ENCODE measurements at regions of chr1 and their contacts with region 1.

Region 1: DNA sequence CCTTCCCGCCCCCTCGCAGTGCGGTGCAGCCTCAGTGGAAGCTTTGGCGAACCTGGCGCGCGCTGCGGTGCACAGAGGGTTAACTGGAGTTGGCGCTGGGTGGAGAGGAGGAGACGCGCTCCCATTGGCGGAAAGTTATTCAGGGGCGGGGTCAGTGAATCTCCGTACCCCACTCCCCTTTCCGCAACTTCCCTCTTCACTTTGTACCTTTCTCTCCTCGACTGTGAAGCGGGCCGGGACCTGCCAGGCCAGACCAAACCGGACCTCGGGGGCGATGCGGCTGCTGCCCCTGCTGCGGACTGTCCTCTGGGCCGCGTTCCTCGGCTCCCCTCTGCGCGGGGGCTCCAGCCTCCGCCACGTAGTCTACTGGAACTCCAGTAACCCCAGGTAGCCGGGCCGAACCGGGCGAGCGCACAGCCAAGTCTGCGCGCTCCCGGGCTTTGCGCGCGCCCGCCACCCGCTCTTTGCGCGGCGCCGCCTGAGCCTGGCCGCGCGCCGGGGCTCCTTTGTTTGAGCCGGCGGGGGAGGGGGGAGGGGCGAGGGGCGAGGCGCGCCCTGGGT is at the start of gene EFNA4:
- DNase-seq: peak; percentile 85 to 89 (median 88)
- ATAC-seq: peak; percentile 80 to 91 (median 88)
- H3K4me3 ChIP-seq: peak within 1 kb of the TSS; percentile 55 to 98 (median 82)
- H3K27ac ChIP-seq: peak within 1 kb of the TSS in 11 of 12 donors; percentile 56 to 84 (median 71)
- H3K4me1 ChIP-seq: peaks cover 0 to 42% (median 25%) of the 10 kb centered on the region in 12 donors
- H3K27me3 ChIP-seq: no peaks in the 10 kb centered on the region
- CTCF ChIP-seq: no peak
- POLR2A ChIP-seq: no peak
- total RNA-seq, gene EFNA4: 1.1 to 3.3 (median 2.2) TPM

Region 2: GRCh38 chr1:154906621-154907081 is 157.0 kb before region 1 on chr1:
- intact Hi-C with region 1: loop called in 2 of 10 experiments (anchors 5 kb)
- DNase-seq: no peak
- ATAC-seq: peak in 3 of 4 donors; percentile 50 to 66 (median 59)
- H3K4me3 ChIP-seq: no peak overlapping the region
- H3K27ac ChIP-seq: no peak overlapping the region
- H3K4me1 ChIP-seq: peaks cover 0 to 4% (median 0%) of the 10 kb centered on the region in 12 donors
- H3K27me3 ChIP-seq: no peaks in the 10 kb centered on the region
- CTCF ChIP-seq: peak; percentile 28 to 60 (median 42)
- POLR2A ChIP-seq: no peak

Region 3: GRCh38 chr1:154936555-154937084 is 127.0 kb before region 1 on chr1 and contains the start of gene PMVK:
- intact Hi-C with region 1: no loop called
- DNase-seq: peak; percentile 96 to 97 (median 97)
- ATAC-seq: peak; percentile 93 to 96 (median 94)
- H3K4me3 ChIP-seq: peak within 1 kb of the TSS; percentile 39 to 80 (median 66)
- H3K27ac ChIP-seq: peak within 1 kb of the TSS; percentile 90 to 100 (median 98)
- H3K4me1 ChIP-seq: peaks cover 0 to 43% (median 18%) of the 10 kb centered on the region in 12 donors
- H3K27me3 ChIP-seq: no peaks in the 10 kb centered on the region
- CTCF ChIP-seq: peak in 10 of 12 donors; percentile 17 to 55 (median 37)
- POLR2A ChIP-seq: peak in 1 of 2 donors; percentile 46
- total RNA-seq, gene PMVK: 12.8 to 50.8 (median 37.5) TPM

Region 4: DNA sequence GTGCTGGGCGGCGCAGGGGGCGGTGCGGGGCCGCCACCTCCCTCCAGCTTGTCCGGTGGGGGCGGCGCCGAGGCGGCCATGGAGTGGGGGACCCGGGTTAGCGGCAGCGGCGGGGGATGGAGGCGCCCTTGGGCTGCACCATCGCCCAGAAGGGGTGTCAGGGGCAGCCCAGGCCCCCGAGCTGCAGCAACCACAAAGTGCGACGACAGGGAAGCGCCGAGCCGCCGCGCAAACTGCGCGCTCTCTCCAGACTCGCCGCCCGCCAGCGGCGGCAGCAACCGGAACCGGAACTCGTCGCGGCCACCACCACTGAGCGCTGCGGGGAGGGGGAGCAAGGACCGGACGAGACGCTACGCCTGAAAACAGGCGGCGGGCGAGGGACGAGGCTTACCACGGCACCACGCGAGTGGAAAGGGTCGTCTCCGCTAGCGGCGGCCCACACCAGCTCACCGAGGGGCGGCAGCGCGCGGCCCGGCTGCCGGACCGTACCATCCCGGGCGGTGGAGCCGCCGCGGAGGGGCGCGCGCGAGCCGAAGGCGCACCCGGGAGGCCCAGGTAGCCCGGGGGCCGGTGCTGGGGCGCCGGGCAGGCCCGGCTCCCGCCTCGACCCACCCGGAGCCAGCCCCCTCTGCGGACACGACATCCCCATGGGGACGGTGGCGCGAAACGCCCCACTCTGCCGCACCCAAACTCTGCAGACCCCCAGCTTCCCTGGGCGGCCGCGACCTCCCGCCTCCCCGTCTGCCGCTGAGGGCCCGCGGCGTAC is 102.0 kb before region 1 on chr1 and contains the start of gene PYGO2:
- intact Hi-C with region 1: loop called in 7 of 10 experiments (anchors 5 to 10 kb)
- DNase-seq: peak; percentile 82 to 92 (median 85)
- ATAC-seq: peak; percentile 67 to 89 (median 86)
- H3K4me3 ChIP-seq: peak within 1 kb of the TSS; percentile 80 to 99 (median 89)
- H3K27ac ChIP-seq: peak within 1 kb of the TSS; percentile 94 to 100 (median 99)
- H3K4me1 ChIP-seq: peaks cover 1 to 44% (median 23%) of the 10 kb centered on the region in 12 donors
- H3K27me3 ChIP-seq: no peaks in the 10 kb centered on the region
- CTCF ChIP-seq: peak; percentile 22 to 95 (median 68)
- POLR2A ChIP-seq: peak in 1 of 2 donors; percentile 84
- total RNA-seq, gene PYGO2: 10.7 to 19.2 (median 16.3) TPM

Region 5: DNA sequence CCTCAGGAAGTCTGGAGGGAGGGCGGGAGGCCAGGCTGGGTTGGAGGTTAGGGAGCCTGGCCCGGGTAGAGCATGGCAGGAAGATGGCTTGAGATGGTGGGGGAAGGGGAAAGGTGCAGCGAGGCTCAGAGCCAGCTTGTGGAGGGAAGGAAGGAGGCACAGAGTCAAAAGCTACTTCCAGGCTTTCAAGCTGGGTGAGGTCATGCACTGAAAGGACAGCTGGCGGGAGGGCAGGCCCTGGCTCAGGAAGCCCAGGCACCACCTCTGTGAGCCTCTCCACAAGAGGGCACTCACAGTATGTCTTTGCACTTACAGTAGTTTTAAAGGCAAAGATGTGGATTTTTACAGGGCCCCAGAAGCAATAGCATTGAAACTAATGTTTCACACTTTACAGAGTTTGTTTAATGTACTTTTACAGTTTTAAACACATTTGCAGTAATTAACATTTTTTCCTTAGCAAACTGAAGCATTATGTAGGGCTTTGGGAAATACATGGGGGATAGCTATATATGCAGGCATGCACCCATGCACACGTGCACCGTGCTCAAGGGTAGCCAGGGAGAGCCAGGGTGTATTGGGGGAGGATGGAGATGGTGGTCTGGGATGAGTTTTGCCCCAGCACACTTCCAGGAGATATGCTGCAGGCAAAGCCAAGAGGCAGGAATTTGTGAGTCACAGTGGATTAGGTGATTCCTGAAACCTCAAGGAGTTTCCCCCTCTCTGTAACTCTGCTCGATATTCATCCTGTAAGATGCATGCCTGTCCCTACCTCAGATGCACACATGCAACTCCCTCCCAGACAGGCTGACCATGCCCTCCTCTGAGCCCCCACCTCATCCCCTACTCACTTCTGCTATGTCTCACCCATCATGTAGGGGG is 18.6 kb before region 1 on chr1:
- intact Hi-C with region 1: loop called in 3 of 10 experiments (anchors 1 kb)
- DNase-seq: peak; percentile 83 to 88 (median 86)
- ATAC-seq: peak; percentile 87 to 95 (median 94)
- H3K4me3 ChIP-seq: no peak overlapping the region
- H3K27ac ChIP-seq: peak overlapping the region in 5 of 12 donors; percentile 6 to 57 (median 20)
- H3K4me1 ChIP-seq: peaks cover 0 to 27% (median 14%) of the 10 kb centered on the region in 12 donors
- H3K27me3 ChIP-seq: no peaks in the 10 kb centered on the region
- CTCF ChIP-seq: peak; percentile 68 to 90 (median 74)
- POLR2A ChIP-seq: no peak

Region 6: DNA sequence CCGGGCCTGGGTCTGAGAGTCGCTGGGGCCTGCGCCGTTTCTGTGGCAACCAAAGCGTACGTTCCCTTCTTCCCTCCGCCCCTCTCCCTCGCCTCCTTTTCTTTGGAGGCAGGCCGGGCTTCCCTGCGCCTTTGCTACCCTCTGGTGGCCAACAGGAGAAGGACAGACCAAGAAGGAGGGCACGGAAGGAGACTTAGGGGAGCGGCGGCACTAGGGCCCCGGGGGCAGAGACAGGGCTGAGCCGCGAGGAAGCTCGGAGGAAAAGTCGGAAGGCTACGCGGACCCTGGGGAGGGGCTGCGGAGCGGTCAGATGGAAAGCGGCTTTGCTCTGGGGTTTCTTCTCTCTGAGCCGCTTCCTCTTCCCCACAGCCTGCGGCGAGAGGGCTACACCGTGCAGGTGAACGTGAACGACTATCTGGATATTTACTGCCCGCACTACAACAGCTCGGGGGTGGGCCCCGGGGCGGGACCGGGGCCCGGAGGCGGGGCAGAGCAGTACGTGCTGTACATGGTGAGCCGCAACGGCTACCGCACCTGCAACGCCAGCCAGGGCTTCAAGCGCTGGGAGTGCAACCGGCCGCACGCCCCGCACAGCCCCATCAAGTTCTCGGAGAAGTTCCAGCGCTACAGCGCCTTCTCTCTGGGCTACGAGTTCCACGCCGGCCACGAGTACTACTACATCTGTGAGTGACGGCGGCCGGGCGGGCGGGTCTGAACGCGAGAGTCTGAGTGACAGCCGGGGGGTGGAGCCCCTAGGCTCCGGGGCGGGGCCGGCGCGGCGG is 21.3 kb after region 1 on chr1:
- intact Hi-C with region 1: loop called in 2 of 10 experiments (anchors 1 to 2 kb)
- DNase-seq: peak; percentile 92 to 96 (median 93)
- ATAC-seq: peak; percentile 83 to 91 (median 88)
- H3K4me3 ChIP-seq: peak overlapping the region; percentile 52 to 87 (median 73)
- H3K27ac ChIP-seq: peak overlapping the region; percentile 65 to 97 (median 88)
- H3K4me1 ChIP-seq: peaks cover 9 to 63% (median 44%) of the 10 kb centered on the region in 12 donors
- H3K27me3 ChIP-seq: peaks cover 38 to 46% (median 45%) of the 10 kb centered on the region in 9 donors
- CTCF ChIP-seq: peak; percentile 89 to 98 (median 93)
- POLR2A ChIP-seq: no peak

Measured in heart left ventricle (tissue), 16 donors.